CD8-positive, alpha-beta T cell (primary cell): ENCODE measurements at regions of chr3 and their contacts with region 1.

Region 1: DNA sequence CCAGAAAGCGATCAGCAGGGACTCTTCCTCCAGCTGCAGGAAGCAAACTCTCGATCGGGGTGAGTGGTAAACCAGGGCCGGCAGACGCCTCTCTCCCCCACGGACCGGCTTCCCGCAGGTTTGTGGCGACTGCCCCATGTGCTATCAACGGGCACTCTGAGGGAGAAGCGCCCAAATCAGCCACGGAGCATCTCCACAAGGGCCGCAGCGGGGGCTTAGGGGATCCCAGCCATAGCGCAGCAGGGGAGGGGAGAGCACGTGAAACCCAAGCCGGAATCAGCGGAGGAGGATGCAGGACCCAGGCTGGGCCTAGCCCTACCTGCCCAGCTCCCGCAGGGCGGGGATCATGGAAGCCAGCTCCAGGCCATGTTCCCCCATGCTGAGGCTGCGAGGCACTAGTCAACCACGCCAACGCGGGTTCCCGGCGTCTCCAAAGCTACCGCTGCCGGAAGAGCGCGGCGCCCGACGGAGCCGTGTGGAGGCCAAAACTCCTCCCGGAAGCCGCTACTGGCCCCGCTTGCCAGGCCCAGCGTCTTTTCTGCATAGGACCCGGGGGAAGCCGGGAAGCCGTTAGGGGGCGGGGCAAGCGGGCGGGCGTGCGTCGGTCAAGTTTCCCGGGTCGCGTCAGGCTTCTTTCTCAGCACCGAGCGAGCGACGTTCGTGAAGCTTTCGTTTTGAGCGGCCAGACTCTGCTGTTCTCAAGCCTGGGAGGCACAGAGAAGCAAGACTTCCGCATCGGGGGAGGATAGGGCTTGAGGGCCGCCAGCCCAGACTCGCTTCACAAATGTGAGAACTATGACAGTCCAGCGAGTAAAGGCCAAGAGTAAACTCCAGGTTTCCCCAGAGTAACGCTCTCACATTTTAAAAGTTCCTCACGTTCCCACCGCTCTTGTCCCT is at the start of gene ATR:
- DNase-seq: peak; percentile 91 to 98 (median 97)
- ATAC-seq: peak; percentile 91
- H3K4me3 ChIP-seq: peak within 1 kb of the TSS; percentile 92 to 99
- H3K4me3 Mint-ChIP-seq: peak within 1 kb of the TSS; percentile 96
- H3K27ac ChIP-seq: peak within 1 kb of the TSS; percentile 97 to 99
- H3K27ac Mint-ChIP-seq: peak within 1 kb of the TSS; percentile 98
- H3K4me1 ChIP-seq: peaks cover 45% of the 10 kb centered on the region
- H3K4me1 Mint-ChIP-seq: peaks cover 52% of the 10 kb centered on the region
- H3K27me3 ChIP-seq: no peaks in the 10 kb centered on the region
- H3K27me3 Mint-ChIP-seq: no peaks in the 10 kb centered on the region
- CTCF ChIP-seq: no peak
- total RNA-seq, gene ATR: 26.7 to 28.0 TPM

Region 2: GRCh38 chr3:140941434-140942220 is 1636.9 kb before region 1 on chr3 and contains the start of gene SLC25A36:
- CTCF ChIA-PET with region 1: no interaction called
- POLR2A ChIA-PET with region 1: no interaction called
- intact Hi-C with region 1: loop called (anchors 5 kb)
- DNase-seq: peak; percentile 90 to 100 (median 96)
- ATAC-seq: peak; percentile 96
- H3K4me3 ChIP-seq: peak within 1 kb of the TSS; percentile 71 to 78
- H3K4me3 Mint-ChIP-seq: peak within 1 kb of the TSS; percentile 90
- H3K27ac ChIP-seq: peak within 1 kb of the TSS; percentile 85 to 88
- H3K27ac Mint-ChIP-seq: peak within 1 kb of the TSS; percentile 99
- H3K4me1 ChIP-seq: peaks cover 14% of the 10 kb centered on the region
- H3K4me1 Mint-ChIP-seq: peaks cover 36% of the 10 kb centered on the region
- H3K27me3 ChIP-seq: no peaks in the 10 kb centered on the region
- H3K27me3 Mint-ChIP-seq: no peaks in the 10 kb centered on the region
- CTCF ChIP-seq: no peak
- total RNA-seq, gene SLC25A36: 156 to 165 TPM

Region 3: DNA sequence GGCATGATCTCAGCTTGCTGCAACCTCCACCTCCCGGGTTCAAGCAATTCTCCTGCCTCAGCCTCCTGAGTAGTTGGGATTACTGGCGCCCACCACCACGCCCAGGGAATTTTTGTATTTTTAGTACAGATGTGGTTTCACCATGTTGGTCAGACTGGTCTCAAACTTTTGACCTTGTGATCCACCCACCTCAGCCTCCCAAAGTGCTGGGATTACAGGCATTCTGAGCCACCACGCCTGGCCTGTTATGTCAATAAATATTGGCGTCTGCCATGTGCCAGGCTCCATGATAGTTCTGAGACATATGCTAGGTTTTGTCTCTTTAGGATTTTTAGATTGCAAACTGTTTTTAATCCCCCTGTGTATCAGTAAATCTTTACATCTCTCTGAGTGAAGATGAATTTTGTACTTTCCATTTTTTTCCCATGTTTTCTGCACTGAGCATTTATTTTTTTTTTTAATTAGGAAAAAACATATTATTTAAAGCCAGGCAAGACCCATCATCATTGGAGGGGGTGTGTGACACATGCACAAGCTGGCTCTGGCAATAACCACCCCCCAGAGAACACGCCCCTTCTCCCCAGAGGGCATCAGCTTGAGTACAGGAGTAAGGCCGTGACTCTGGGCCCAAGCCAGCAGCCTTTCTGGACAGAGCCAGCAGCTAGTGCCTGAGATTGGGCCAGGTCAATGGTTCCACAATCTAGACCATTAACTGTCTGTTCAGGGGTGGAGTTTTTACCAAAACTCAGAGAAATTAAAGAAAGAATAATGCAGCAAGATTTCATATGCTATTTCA is 753.2 kb before region 1 on chr3:
- CTCF ChIA-PET with region 1: no interaction called
- POLR2A ChIA-PET with region 1: no interaction called
- intact Hi-C with region 1: no loop called
- DNase-seq: no peak
- ATAC-seq: no peak
- H3K4me3 ChIP-seq: no peak overlapping the region
- H3K4me3 Mint-ChIP-seq: no peak overlapping the region
- H3K27ac ChIP-seq: no peak overlapping the region
- H3K27ac Mint-ChIP-seq: no peak overlapping the region
- H3K4me1 ChIP-seq: no peaks in the 10 kb centered on the region
- H3K4me1 Mint-ChIP-seq: no peaks in the 10 kb centered on the region
- H3K27me3 ChIP-seq: no peaks in the 10 kb centered on the region
- H3K27me3 Mint-ChIP-seq: peaks cover 2% of the 10 kb centered on the region
- CTCF ChIP-seq: no peak

Region 4: DNA sequence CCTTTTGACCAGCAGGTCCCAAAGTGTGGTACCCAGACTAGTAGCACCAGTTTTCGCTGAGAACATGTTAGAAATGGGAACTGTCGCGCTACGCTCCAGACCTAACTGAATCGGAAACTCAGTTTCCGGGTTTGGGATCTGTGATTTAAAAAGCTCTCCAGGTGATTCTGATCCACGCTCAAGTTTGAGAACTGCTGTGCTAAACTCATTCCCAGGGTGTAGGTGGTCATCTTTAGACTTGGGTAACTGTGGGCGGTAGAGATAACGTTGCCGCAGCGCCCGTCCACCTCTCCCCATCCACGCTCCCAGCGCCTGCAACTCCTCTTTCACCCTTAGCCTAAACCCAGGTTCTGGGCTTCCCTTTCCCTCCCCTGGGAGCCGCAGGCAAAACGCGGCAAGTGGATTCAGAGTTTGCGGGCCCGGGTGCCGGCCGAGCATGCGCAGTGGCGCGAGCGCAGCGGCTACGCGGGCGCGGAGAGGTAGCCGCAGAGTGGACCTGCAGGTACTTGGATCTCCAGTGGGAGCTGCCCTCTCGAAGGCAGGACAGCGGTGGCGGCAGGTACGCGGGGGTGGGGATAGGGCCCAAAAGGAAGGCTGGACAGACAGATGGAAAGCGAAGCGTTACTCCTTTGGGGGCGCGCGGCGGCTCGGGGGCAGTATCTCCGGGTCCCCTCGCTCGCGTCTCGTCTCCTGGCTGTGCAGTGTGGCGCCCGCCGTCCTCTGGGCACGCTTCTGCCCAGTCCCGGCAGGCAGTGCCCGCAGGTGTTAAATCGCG is 17.6 kb after region 1 on chr3 and contains the start of gene PLS1:
- CTCF ChIA-PET with region 1: interaction called, 6 read pairs
- POLR2A ChIA-PET with region 1: interaction called, 21 read pairs
- intact Hi-C with region 1: loop called (anchors 1 kb)
- DNase-seq: peak; percentile 74 to 91 (median 83)
- ATAC-seq: peak; percentile 87
- H3K4me3 ChIP-seq: peak within 1 kb of the TSS; percentile 75 to 84
- H3K4me3 Mint-ChIP-seq: peak within 1 kb of the TSS; percentile 96
- H3K27ac ChIP-seq: peak within 1 kb of the TSS; percentile 28 to 34
- H3K27ac Mint-ChIP-seq: peak within 1 kb of the TSS; percentile 89
- H3K4me1 ChIP-seq: peaks cover 17% of the 10 kb centered on the region
- H3K4me1 Mint-ChIP-seq: peaks cover 17% of the 10 kb centered on the region
- H3K27me3 ChIP-seq: no peaks in the 10 kb centered on the region
- H3K27me3 Mint-ChIP-seq: peaks cover 11% of the 10 kb centered on the region
- CTCF ChIP-seq: no peak
- total RNA-seq, gene PLS1: 0.57 to 2.0 TPM

Region 5: GRCh38 chr3:142633073-142633472 is 54.5 kb after region 1 on chr3:
- CTCF ChIA-PET with region 1: no interaction called
- POLR2A ChIA-PET with region 1: no interaction called
- intact Hi-C with region 1: no loop called
- DNase-seq: no peak
- ATAC-seq: no peak
- H3K4me3 ChIP-seq: no peak overlapping the region
- H3K4me3 Mint-ChIP-seq: no peak overlapping the region
- H3K27ac ChIP-seq: no peak overlapping the region
- H3K27ac Mint-ChIP-seq: no peak overlapping the region
- H3K4me1 ChIP-seq: no peaks in the 10 kb centered on the region
- H3K4me1 Mint-ChIP-seq: no peaks in the 10 kb centered on the region
- H3K27me3 ChIP-seq: no peaks in the 10 kb centered on the region
- H3K27me3 Mint-ChIP-seq: no peaks in the 10 kb centered on the region
- CTCF ChIP-seq: no peak

Region 6: GRCh38 chr3:142987080-142987700 is 408.6 kb after region 1 on chr3:
- CTCF ChIA-PET with region 1: interaction called, 10 read pairs
- POLR2A ChIA-PET with region 1: no interaction called
- intact Hi-C with region 1: no loop called
- DNase-seq: peak in 2 of 9 experiments; percentile 40 to 59
- ATAC-seq: peak; percentile 62
- H3K4me3 ChIP-seq: no peak overlapping the region
- H3K4me3 Mint-ChIP-seq: no peak overlapping the region
- H3K27ac ChIP-seq: no peak overlapping the region
- H3K27ac Mint-ChIP-seq: no peak overlapping the region
- H3K4me1 ChIP-seq: no peaks in the 10 kb centered on the region
- H3K4me1 Mint-ChIP-seq: no peaks in the 10 kb centered on the region
- H3K27me3 ChIP-seq: peaks cover 0 to 3% of the 10 kb centered on the region in 2 experiments
- H3K27me3 Mint-ChIP-seq: peaks cover 10% of the 10 kb centered on the region
- CTCF ChIP-seq: peak; percentile 86

Region 7: DNA sequence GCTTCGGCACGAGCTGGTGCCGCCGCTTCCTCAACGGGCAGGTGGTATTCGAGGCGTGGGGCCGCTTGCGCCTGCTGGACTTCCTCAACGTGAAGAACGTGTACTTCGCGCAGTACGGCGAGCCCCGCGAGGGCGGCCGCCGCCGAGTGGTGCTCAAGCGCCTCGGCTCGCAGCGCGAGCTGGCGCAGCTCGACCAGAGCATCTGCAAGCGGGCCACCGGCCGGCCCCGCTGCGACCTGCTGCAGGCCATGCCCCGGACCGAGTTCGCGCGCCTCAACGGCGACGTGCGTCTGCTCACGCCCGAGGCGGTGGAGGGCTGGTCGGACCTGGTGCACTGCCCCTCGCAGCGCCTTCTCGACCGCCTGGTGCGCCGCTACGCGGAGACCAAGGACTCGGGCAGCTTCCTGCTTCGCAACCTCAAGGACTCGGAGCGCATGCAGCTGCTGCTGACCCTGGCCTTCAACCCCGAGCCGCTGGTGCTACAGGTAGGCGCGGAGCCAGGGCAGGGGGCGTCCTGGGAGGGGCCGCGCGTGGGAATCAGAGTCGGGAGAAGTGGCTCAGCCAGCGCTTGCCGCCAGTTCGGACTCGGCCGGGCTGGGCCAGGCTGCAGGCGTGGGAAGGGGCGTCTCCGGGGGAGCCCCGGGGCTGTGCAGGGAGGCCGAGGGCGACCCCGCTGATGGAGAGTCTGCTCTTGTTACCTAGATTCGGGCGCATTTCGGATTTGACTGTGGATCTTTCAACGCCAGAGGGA is 1394.1 kb after region 1 on chr3:
- CTCF ChIA-PET with region 1: no interaction called
- POLR2A ChIA-PET with region 1: no interaction called
- intact Hi-C with region 1: loop called (anchors 1 to 10 kb)
- DNase-seq: peak; percentile 28 to 91 (median 52)
- ATAC-seq: no peak
- H3K4me3 ChIP-seq: peak overlapping the region; percentile 75 to 89
- H3K4me3 Mint-ChIP-seq: peak overlapping the region; percentile 95
- H3K27ac ChIP-seq: peak overlapping the region; percentile 69 to 82
- H3K27ac Mint-ChIP-seq: peak overlapping the region; percentile 93
- H3K4me1 ChIP-seq: peaks cover 34% of the 10 kb centered on the region
- H3K4me1 Mint-ChIP-seq: peaks cover 39% of the 10 kb centered on the region
- H3K27me3 ChIP-seq: no peaks in the 10 kb centered on the region
- H3K27me3 Mint-ChIP-seq: peaks cover 5% of the 10 kb centered on the region
- CTCF ChIP-seq: peak; percentile 51